AG04450 (cell line): ENCODE measurements at regions of chr5 and their contacts with region 1.

Region 1: DNA sequence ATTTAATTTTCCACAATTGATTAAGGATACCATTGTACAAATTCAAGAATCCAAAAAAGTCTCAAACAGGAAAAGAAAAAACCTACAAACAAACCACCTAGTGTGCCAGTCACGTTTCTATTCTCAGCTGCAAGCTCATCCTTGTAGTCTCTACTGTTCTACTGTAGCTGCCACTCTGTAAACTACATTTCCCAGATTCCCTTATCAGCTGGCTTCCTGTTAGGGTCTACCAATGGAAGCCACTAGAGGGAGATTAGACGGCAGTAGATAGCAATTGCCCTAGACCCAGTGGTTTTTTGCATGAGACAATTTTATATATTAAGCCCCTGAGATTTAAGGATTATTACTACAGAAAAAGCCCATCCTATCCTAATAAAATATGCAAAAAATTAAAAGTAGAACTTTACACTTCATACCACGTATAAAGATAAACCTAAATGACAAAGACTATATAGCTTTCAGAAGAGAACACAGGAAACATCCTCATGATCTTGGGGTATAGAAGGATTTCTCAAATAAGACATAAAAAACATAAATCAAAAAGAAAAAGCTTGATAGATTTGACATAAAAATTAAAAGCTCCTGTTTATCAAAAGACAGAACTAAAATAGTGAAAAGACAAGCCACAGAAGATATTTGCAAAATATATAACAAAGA is 37.4 kb downstream of the P4HA2 start:
- DNase-seq: peak; percentile 62
- H3K4me3 ChIP-seq: no peak overlapping the region
- H3K27ac ChIP-seq: no peak overlapping the region
- H3K27me3 ChIP-seq: no peaks in the 10 kb centered on the region
- CTCF ChIP-seq: peak; percentile 95

Region 2: DNA sequence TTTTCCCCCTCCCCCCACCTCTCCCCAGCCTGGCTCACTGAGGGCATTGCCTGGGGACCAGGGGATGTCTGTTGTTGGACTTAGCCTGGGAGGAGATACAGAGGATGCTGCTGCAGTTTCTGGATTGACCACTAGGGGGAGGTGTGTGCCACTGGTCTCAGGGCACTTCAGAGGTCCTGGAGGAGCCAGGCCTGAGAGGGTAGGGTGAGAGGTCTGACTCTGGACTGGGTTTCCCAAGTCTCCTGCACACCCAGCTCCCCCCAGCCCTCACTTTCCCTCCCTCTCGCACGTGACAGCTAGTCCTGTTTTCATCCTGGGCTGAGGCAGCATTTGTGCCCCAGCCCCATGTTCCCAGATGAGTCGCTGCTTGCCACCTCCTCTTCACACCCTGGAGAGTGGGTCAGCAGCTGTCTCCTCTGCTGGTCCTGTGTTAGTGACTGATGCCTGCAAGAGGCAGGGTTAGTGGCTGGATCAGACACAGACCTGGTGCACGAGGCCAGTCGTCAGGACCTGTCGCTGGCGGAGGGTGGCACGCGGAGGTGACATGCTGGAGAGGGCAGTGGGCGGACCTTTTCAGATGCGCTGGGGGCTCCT is 125.5 kb before region 1 on chr5:
- CTCF ChIA-PET with region 1: interaction called, 21 read pairs
- POLR2A ChIA-PET with region 1: no interaction called
- DNase-seq: peak; percentile 43
- H3K4me3 ChIP-seq: no peak overlapping the region
- H3K27ac ChIP-seq: no peak overlapping the region
- H3K27me3 ChIP-seq: peaks cover 4% of the 10 kb centered on the region
- CTCF ChIP-seq: peak; percentile 93

Region 3: DNA sequence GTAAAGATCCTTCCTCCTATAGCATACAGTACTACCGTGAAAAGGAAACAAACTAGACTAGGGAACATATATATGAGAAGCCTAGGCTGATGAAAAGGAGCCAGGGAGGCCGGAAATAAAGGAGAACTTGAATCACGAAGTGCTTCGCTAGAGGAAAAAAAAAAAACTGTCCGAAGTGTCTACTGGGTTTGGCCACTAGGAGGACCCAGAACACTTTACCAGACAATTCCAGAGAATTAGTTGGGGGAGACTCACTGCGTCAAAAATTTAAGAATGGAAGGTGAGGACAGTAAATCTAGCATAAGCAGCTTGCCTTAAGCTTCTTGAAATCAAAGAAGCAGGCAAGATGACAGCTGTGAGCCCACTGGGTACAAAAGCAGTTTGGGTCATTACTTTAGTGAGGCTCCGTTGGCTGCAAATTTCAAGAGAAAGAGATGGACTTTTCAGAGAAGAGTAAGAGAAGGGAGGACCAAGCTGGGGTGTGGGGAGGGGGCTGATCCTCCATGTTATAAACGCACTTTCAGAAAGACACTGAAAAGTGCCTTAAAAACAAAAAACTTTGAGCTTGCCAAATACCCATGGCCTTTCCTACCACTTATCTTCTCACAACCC is 10.0 kb before region 1 on chr5:
- CTCF ChIA-PET with region 1: interaction called, 66 read pairs
- POLR2A ChIA-PET with region 1: no interaction called
- DNase-seq: peak; percentile 29
- H3K4me3 ChIP-seq: no peak overlapping the region
- H3K27ac ChIP-seq: no peak overlapping the region
- H3K27me3 ChIP-seq: no peaks in the 10 kb centered on the region
- CTCF ChIP-seq: peak; percentile 87

Region 4: GRCh38 chr5:132205385-132206125 is 15.3 kb after region 1 on chr5:
- CTCF ChIA-PET with region 1: interaction called, 15 read pairs
- POLR2A ChIA-PET with region 1: no interaction called
- DNase-seq: no peak
- H3K4me3 ChIP-seq: no peak overlapping the region
- H3K27ac ChIP-seq: peak overlapping the region; percentile 2
- H3K27me3 ChIP-seq: no peaks in the 10 kb centered on the region
- CTCF ChIP-seq: no peak

Region 5: DNA sequence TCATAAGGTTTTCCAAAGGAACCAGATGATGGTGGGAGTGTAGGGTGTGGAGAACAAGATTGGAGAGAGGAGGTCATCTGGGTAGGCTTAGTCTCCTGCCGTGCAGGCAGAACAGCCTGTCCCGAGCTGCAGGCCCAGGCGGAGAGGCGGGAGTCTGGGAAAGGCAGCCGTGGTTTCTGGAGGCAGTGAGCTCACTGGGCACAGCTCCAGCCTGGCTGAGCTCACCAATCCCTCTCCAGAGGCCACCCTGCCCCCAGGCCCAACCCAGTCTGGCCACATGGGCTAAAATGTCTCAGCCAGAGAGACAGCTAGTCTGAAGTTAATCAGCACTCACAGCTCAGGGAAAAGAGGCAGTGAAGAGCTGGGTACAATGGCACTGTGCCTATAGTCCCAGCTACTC is 25.0 kb after region 1 on chr5:
- CTCF ChIA-PET with region 1: interaction called, 17 read pairs
- POLR2A ChIA-PET with region 1: no interaction called
- DNase-seq: peak; percentile 88
- H3K4me3 ChIP-seq: no peak overlapping the region
- H3K27ac ChIP-seq: peak overlapping the region; percentile 57
- H3K27me3 ChIP-seq: no peaks in the 10 kb centered on the region
- CTCF ChIP-seq: no peak